H1 (cell line): ENCODE measurements at regions of chr13 and their contacts with region 1.

Region 1: DNA sequence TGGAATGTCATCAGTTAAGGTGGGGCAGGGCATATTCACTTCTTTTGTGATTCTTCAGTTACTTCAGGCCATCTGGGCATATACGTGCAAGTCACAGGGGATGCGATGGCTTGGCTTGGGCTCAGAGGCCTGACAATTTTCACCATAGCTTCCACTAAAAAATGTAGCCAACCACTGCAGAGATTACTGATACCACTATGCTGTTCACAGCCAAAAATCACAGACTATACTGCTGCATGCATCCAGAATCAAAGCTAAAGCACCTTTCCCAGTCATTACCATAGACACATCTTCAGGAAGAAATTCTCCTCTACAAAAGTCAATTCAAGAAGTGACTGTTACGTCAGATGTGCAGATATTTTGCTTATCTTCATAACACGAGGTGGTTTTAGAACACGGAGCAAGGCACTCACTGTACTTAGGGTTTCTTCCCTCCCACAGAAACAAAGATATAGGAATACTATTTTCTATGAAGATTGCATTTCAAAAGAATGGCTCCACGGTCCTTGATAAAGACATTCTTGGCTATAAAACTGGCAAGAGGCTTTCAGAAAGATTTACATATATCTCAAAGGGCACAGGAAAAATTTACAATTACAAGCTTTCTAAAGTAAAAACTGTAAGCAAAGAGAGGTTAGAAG is 1556.6 kb upstream of the PRR20A start:
- DNase-seq: no peak
- H3K4me3 ChIP-seq: peak overlapping the region in 2 of 4 experiments; percentile 24 to 77; a peak in 5 of 8 replicates
- H3K27ac ChIP-seq: peak overlapping the region; percentile 78; the same call in 1 of the 2 replicates
- H3K4me1 ChIP-seq: peaks cover 0 to 9% (median 4%) of the 10 kb centered on the region in 4 experiments; a peak in 3 of 7 replicates
- H3K27me3 ChIP-seq: no peaks in the 10 kb centered on the region
- CTCF ChIP-seq: no peak
- EP300 ChIP-seq: no peak
- POLR2A ChIP-seq: peak in 1 of 2 experiments; percentile 37; a peak in 1 of 3 replicates
- RAD21 ChIP-seq: no peak

Region 2: GRCh38 chr13:55528434-55528833 is 55.6 kb before region 1 on chr13:
- CTCF ChIA-PET with region 1: no interaction called
- POLR2A ChIA-PET with region 1: no interaction called
- DNase-seq: no peak
- H3K4me3 ChIP-seq: no peak overlapping the region
- H3K27ac ChIP-seq: no peak overlapping the region
- H3K4me1 ChIP-seq: no peaks in the 10 kb centered on the region
- H3K27me3 ChIP-seq: no peaks in the 10 kb centered on the region
- CTCF ChIP-seq: no peak
- EP300 ChIP-seq: no peak
- POLR2A ChIP-seq: no peak
- RAD21 ChIP-seq: no peak

Region 3: DNA sequence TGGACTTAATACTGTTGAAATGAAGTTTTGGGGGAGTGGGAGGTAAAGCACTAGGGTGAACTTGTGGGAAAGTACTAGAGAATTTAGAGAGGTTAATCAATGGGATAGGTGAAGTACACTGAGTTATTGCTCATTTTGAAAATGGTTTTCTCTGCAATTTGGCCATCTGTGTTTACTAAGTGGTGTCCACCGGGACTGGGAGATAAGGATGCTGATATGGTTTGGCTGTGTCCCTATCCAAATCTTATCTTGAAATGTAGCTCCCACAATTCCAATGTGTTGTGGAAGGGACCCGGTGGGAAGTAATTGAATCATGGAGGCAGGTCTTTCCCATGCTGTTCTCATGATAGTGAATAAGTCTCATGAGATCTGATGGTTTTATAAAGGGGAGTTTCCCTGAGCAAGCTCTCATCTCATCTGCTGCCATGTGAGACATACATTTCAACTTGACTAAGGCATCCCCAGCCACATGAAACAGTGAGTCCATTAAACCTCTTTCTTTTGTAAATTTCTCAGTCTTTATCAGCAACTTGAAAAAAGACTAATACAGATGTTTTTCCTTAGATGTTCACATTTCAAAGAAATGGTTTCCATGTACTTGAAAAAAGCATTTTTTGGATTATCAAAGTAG is 12.7 kb before region 1 on chr13:
- CTCF ChIA-PET with region 1: interaction called, 7 read pairs
- POLR2A ChIA-PET with region 1: interaction called, 17 read pairs
- DNase-seq: no peak
- H3K4me3 ChIP-seq: no peak overlapping the region
- H3K27ac ChIP-seq: no peak overlapping the region
- H3K4me1 ChIP-seq: peaks cover 0 to 7% (median 3%) of the 10 kb centered on the region in 4 experiments; a peak in 3 of 7 replicates
- H3K27me3 ChIP-seq: no peaks in the 10 kb centered on the region
- CTCF ChIP-seq: no peak
- EP300 ChIP-seq: no peak
- POLR2A ChIP-seq: peak; percentile 71 to 96
- RAD21 ChIP-seq: no peak

Region 4: DNA sequence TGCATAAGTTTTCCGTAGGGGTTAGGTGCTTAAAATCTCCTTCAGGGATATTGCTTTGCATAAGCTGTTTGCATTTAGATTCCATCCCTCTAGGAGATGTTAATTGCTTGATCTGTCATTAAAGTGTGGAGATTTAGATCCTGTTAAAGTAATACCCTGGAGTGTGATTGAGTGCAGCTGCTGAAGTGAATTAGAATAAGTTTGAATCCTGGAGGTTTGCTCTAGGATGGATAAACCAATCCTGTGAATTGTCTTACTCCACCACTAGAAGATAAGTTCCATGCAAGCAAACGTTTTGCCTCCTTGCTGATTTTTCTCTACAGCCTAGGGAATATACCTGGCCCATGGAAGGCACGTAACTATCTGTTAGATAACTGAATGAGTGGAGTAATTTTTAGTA is 69.4 kb after region 1 on chr13:
- CTCF ChIA-PET with region 1: no interaction called
- POLR2A ChIA-PET with region 1: interaction called, 13 read pairs
- DNase-seq: no peak
- H3K4me3 ChIP-seq: peak overlapping the region in 1 of 4 experiments; percentile 44; a peak in 1 of 8 replicates
- H3K27ac ChIP-seq: no peak overlapping the region
- H3K4me1 ChIP-seq: peaks cover 0 to 17% (median 3%) of the 10 kb centered on the region in 4 experiments; a peak in 3 of 7 replicates
- H3K27me3 ChIP-seq: no peaks in the 10 kb centered on the region
- CTCF ChIP-seq: no peak
- EP300 ChIP-seq: no peak
- POLR2A ChIP-seq: peak in 1 of 2 experiments; percentile 2; a peak in 1 of 3 replicates
- RAD21 ChIP-seq: no peak